Endothelial cell of umbilical vein (primary cell): ENCODE measurements at regions of chr6 and their contacts with region 1.

Region 1: DNA sequence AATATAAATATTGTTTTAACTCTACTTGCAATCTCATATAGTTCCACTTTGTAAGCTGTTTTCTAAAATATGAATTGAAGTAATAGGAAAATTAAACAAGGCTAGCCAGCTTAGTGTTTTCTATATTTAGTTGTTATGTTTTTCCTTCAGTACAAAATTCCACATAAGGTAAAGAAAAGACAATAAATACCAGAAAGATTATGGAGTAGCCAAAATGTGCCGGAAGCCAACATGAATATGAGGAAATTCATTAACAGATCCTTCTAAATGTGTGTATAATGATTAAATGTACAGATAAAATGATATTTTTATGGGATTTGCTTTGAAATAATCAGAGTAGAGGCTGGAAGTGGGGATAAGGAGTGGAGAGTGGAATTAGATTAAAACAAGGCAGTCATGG is 52.5 kb upstream of the COL21A1 start:
- DNase-seq: peak; percentile 92
- H3K4me3 ChIP-seq: no peak overlapping the region
- H3K27ac ChIP-seq: peak overlapping the region; percentile 22
- H3K4me1 ChIP-seq: peaks cover 22% of the 10 kb centered on the region
- H3K27me3 ChIP-seq: no peaks in the 10 kb centered on the region
- CTCF ChIP-seq: no peak
- POLR2A ChIP-seq: no peak

Region 2: GRCh38 chr6:56329271-56330050 is 29.5 kb after region 1 on chr6:
- CTCF ChIA-PET with region 1: no interaction called
- POLR2A ChIA-PET with region 1: no interaction called
- dilution Hi-C with region 1: no loop called
- intact Hi-C with region 1: loop called (anchors 1 kb)
- DNase-seq: peak; percentile 97
- H3K4me3 ChIP-seq: peak overlapping the region in 1 of 3 experiments; percentile 41
- H3K27ac ChIP-seq: peak overlapping the region; percentile 60
- H3K4me1 ChIP-seq: peaks cover 21% of the 10 kb centered on the region
- H3K27me3 ChIP-seq: no peaks in the 10 kb centered on the region
- CTCF ChIP-seq: no peak
- POLR2A ChIP-seq: peak; percentile 49

Region 3: DNA sequence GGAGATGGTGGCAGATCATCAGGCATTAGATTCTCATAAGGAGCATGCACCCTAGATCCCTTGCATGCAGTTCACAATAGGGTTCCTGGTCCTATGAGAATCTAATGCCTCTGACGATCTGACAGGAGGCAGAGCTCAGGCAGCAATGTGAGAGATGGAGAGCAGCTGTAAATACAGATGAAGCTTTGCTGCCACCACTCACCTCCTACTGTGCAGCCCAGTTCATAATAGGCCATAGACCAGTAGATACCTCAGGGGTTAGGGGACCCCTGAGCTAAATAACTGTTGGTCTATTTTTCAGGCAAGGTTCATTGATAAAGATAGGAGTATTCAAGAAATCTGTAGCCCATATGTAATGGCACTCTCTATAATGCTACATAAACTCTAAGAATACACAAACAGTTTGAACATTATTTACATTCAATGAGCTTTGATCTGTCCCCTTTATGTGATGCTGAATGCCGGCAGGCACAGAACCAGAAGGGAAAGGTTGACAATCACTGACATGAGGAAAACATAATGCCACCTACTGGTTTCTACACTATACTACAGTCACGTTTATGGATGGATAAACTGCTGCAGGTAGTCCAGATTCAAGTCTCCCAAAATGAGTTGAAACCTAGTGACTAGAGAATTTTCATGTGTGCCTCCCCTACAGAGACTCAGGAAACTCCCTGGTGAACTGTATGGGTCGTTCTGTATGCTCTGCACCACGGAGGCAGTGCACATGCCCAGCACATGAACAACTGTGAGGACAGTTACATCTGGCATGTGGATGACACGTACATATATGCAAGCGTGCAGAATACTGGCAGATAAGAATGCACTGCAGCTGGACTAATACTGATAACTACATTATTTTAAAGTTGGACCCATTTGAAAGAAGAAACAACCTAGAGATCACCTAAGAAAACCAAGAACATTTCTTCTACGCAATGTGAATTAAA is 270.8 kb after region 1 on chr6:
- CTCF ChIA-PET with region 1: no interaction called
- POLR2A ChIA-PET with region 1: no interaction called
- dilution Hi-C with region 1: no loop called
- intact Hi-C with region 1: no loop called
- DNase-seq: peak; percentile 52
- H3K4me3 ChIP-seq: no peak overlapping the region
- H3K27ac ChIP-seq: no peak overlapping the region
- H3K4me1 ChIP-seq: no peaks in the 10 kb centered on the region
- H3K27me3 ChIP-seq: no peaks in the 10 kb centered on the region
- CTCF ChIP-seq: peak; percentile 44 to 51
- POLR2A ChIP-seq: no peak